ENCODE measurements at regions of chr4 and their contacts with region 1.

Region 1: GRCh38 chr4:54658252-54659093 is 716 bp downstream of the KIT start:
- DNase-seq: peak; percentile 60
- ATAC-seq: peak; percentile 16
- H3K4me3 Mint-ChIP-seq: peak overlapping the region; percentile 85
- H3K27ac Mint-ChIP-seq: no peak overlapping the region; the same call in 1 of the 2 replicates
- H3K4me1 Mint-ChIP-seq: peaks cover 42% of the 10 kb centered on the region
- H3K27me3 Mint-ChIP-seq: peaks cover 62% of the 10 kb centered on the region
- CTCF ChIP-seq: no peak

Region 2: GRCh38 chr4:54675721-54676461 is 17.4 kb after region 1 on chr4:
- CTCF ChIA-PET with region 1: interaction called, 12 read pairs
- POLR2A ChIA-PET with region 1: interaction called, 4 read pairs
- DNase-seq: peak; percentile 39
- ATAC-seq: peak; percentile 70
- H3K4me3 Mint-ChIP-seq: peak overlapping the region; percentile 23; the same call in 1 of the 2 replicates
- H3K27ac Mint-ChIP-seq: peak overlapping the region; percentile 44
- H3K4me1 Mint-ChIP-seq: peaks cover 62% of the 10 kb centered on the region
- H3K27me3 Mint-ChIP-seq: no peaks in the 10 kb centered on the region
- CTCF ChIP-seq: no peak